ENCODE measurements at regions of chr12 and their contacts with region 1.

Region 1: DNA sequence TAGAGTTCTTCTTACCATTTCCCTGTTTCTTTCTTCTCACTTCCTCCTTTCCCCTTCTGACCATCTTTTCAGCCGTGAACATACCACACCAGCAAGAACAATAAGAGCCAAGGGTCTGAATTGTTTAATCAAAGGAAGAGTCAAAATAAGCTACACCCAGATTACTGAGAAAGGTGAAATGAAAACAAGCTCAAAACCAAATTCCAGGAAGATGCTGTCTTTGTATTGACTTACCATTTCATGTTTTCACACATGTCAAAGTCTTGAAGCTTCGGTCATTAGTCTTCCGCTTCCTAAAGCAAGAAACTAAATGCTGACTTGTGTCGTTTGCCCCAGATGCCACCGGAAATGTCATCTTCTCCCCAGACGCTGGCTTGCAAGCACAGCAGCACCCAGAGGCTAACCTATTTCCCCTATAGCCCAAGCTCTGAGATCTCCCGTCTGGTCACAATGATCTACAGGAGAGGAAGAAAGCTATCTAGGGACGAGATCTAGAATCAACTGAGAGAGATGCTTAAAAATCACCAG is 136.5 kb upstream of the AMIGO2 start:
- DNase-seq: peak; percentile 74
- ATAC-seq: peak; percentile 55
- H3K4me3 Mint-ChIP-seq: peak overlapping the region; percentile 87
- H3K27ac Mint-ChIP-seq: peak overlapping the region; percentile 92
- H3K4me1 Mint-ChIP-seq: peaks cover 35% of the 10 kb centered on the region
- H3K27me3 Mint-ChIP-seq: peaks cover 1% of the 10 kb centered on the region

Region 2: GRCh38 chr12:47190271-47190750 is 25.9 kb before region 1 on chr12:
- POLR2A ChIA-PET with region 1: interaction called, 38 read pairs
- DNase-seq: no peak
- ATAC-seq: no peak
- H3K4me3 Mint-ChIP-seq: no peak overlapping the region
- H3K27ac Mint-ChIP-seq: peak overlapping the region; percentile 56
- H3K4me1 Mint-ChIP-seq: peaks cover 63% of the 10 kb centered on the region
- H3K27me3 Mint-ChIP-seq: no peaks in the 10 kb centered on the region

Region 3: GRCh38 chr12:47270782-47271664 is 54.8 kb after region 1 on chr12:
- POLR2A ChIA-PET with region 1: interaction called, 29 read pairs
- DNase-seq: no peak
- ATAC-seq: peak; percentile 56
- H3K4me3 Mint-ChIP-seq: no peak overlapping the region
- H3K27ac Mint-ChIP-seq: no peak overlapping the region
- H3K4me1 Mint-ChIP-seq: peaks cover 60% of the 10 kb centered on the region
- H3K27me3 Mint-ChIP-seq: no peaks in the 10 kb centered on the region

Region 4: GRCh38 chr12:47307680-47308399 is 91.6 kb after region 1 on chr12:
- POLR2A ChIA-PET with region 1: interaction called, 77 read pairs
- DNase-seq: peak; percentile 47
- ATAC-seq: peak; percentile 93
- H3K4me3 Mint-ChIP-seq: peak overlapping the region; percentile 86
- H3K27ac Mint-ChIP-seq: peak overlapping the region; percentile 92
- H3K4me1 Mint-ChIP-seq: peaks cover 42% of the 10 kb centered on the region
- H3K27me3 Mint-ChIP-seq: no peaks in the 10 kb centered on the region

Region 5: GRCh38 chr12:47377414-47378221 is 161.4 kb after region 1 on chr12:
- POLR2A ChIA-PET with region 1: interaction called, 10 read pairs
- DNase-seq: no peak
- ATAC-seq: no peak
- H3K4me3 Mint-ChIP-seq: no peak overlapping the region
- H3K27ac Mint-ChIP-seq: no peak overlapping the region
- H3K4me1 Mint-ChIP-seq: peaks cover 29% of the 10 kb centered on the region
- H3K27me3 Mint-ChIP-seq: no peaks in the 10 kb centered on the region

Region 6: GRCh38 chr12:47397664-47398281 is 181.6 kb after region 1 on chr12:
- POLR2A ChIA-PET with region 1: interaction called, 55 read pairs
- DNase-seq: peak; percentile 68
- ATAC-seq: peak; percentile 85
- H3K4me3 Mint-ChIP-seq: peak overlapping the region; percentile 69
- H3K27ac Mint-ChIP-seq: peak overlapping the region; percentile 91
- H3K4me1 Mint-ChIP-seq: peaks cover 49% of the 10 kb centered on the region
- H3K27me3 Mint-ChIP-seq: no peaks in the 10 kb centered on the region

Measured in activated naive CD8-positive, alpha-beta T cell treated with anti-CD3 and anti-CD28 coated beads, Interleukin-2, amount 10 ng/mL, durations not matched to agents 7 days and 5 days (primary cell).